Caco-2 (cell line): ENCODE measurements at regions of chr2 and their contacts with region 1.

Region 1: DNA sequence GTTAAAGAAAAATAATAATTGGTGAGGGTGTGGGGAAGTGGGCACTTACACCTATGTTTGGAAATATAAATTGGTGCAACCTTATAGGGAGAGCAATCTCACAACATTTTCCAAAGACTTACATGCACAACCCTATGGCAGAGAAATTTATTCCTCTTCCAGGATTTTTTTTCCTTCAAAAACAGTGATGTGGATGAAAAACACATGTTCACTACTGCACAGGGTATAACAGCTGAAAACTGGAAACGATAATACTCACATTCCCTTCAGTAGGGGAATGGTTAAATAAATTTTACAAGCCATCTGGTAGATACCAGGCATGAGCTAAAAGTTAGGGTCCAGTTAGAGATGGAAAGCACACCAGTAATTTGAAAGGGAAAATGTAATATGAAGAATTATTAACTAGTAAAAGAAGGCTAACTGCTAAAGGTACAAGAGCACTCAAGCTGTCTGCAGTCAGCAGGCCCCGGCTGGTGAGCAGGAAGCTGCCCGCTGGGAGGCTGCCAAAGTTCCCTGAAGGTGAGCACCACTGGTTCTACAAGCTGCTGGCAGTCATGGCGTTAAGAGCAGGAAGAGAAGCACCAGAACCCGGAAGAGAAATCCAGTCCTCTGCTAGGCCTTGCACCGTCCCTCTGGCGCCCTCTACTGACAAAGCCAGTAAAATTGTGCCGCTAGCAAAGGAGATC is 28.4 kb upstream of the CASP8 start:
- DNase-seq: peak; percentile 94 to 95
- H3K4me3 ChIP-seq: no peak overlapping the region
- H3K4me3 Mint-ChIP-seq: peak overlapping the region; percentile 98
- H3K27ac Mint-ChIP-seq: peak overlapping the region; percentile 70
- H3K4me1 ChIP-seq: peaks cover 6% of the 10 kb centered on the region
- H3K4me1 Mint-ChIP-seq: peaks cover 11% of the 10 kb centered on the region
- H3K27me3 ChIP-seq: no peaks in the 10 kb centered on the region
- H3K27me3 Mint-ChIP-seq: no peaks in the 10 kb centered on the region
- CTCF ChIP-seq: peak; percentile 91 to 93

Region 2: DNA sequence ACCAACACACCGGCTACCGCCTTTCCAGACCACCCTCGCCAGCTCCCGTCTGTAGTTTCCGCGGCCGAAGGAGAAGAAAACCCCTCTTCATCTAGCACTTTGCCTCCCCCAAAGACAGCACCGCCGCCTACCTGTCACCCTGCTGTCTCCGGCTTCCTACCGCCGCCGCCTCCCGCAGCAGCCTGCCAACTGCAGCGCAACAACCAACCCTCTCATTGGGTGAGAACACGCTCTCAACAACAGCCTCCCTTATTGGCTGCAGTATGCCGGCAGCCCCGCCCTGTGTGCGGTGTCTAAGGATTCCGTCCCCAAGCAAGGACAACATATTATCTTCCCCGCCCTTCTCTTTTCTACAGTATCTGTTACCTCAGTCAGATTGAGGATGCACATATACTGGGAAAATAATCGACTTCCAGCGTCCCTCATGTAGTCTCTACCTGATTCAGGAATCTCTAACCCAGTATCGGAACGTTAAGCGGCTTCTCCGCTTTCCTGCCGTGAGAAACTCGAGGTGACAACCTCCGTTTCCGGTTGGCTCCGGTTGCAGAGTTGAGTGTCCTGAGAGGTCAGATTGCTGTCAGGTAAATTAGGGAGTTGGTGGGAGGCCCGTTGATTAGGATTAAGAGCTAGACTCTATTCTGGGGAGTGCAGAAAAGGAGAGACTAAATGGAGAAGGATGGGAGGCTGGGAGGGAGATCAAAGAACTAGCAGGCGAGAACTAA is 160.3 kb before region 1 on chr2 and contains the starts of genes HYCC2 and NDUFB3:
- CTCF ChIA-PET with region 1: interaction called, 15 read pairs
- POLR2A ChIA-PET with region 1: no interaction called
- intact Hi-C with region 1: loop called (anchors 2 kb)
- DNase-seq: peak; percentile 96
- H3K4me3 ChIP-seq: peak within 1 kb of the TSS; percentile 71
- H3K4me3 Mint-ChIP-seq: peak within 1 kb of the TSS; percentile 87
- H3K27ac Mint-ChIP-seq: peak within 1 kb of the TSS; percentile 89
- H3K4me1 ChIP-seq: peaks cover 24% of the 10 kb centered on the region
- H3K4me1 Mint-ChIP-seq: peaks cover 11% of the 10 kb centered on the region
- H3K27me3 ChIP-seq: no peaks in the 10 kb centered on the region
- H3K27me3 Mint-ChIP-seq: no peaks in the 10 kb centered on the region
- CTCF ChIP-seq: peak; percentile 7 to 29
- total RNA-seq, gene HYCC2: 21.8 and 21.9 TPM in 2 replicates
- total RNA-seq, gene NDUFB3: 117 and 118 TPM in 2 replicates

Region 3: GRCh38 chr2:201176081-201176481 is 55.8 kb before region 1 on chr2:
- CTCF ChIA-PET with region 1: interaction called, 76 read pairs
- POLR2A ChIA-PET with region 1: interaction called, 3 read pairs
- intact Hi-C with region 1: no loop called
- DNase-seq: no peak
- H3K4me3 ChIP-seq: no peak overlapping the region
- H3K4me3 Mint-ChIP-seq: no peak overlapping the region
- H3K27ac Mint-ChIP-seq: no peak overlapping the region
- H3K4me1 ChIP-seq: no peaks in the 10 kb centered on the region
- H3K4me1 Mint-ChIP-seq: no peaks in the 10 kb centered on the region
- H3K27me3 ChIP-seq: no peaks in the 10 kb centered on the region
- H3K27me3 Mint-ChIP-seq: no peaks in the 10 kb centered on the region
- CTCF ChIP-seq: no peak

Region 4: GRCh38 chr2:201257956-201258665 is 26.2 kb after region 1 on chr2:
- CTCF ChIA-PET with region 1: interaction called, 4 read pairs
- POLR2A ChIA-PET with region 1: no interaction called
- intact Hi-C with region 1: loop called (anchors 1 kb)
- DNase-seq: peak; percentile 62 to 64
- H3K4me3 ChIP-seq: peak overlapping the region; percentile 44
- H3K4me3 Mint-ChIP-seq: peak overlapping the region; percentile 88
- H3K27ac Mint-ChIP-seq: peak overlapping the region; percentile 93
- H3K4me1 ChIP-seq: peaks cover 8% of the 10 kb centered on the region
- H3K4me1 Mint-ChIP-seq: peaks cover 8% of the 10 kb centered on the region
- H3K27me3 ChIP-seq: no peaks in the 10 kb centered on the region
- H3K27me3 Mint-ChIP-seq: no peaks in the 10 kb centered on the region
- CTCF ChIP-seq: no peak

Region 5: DNA sequence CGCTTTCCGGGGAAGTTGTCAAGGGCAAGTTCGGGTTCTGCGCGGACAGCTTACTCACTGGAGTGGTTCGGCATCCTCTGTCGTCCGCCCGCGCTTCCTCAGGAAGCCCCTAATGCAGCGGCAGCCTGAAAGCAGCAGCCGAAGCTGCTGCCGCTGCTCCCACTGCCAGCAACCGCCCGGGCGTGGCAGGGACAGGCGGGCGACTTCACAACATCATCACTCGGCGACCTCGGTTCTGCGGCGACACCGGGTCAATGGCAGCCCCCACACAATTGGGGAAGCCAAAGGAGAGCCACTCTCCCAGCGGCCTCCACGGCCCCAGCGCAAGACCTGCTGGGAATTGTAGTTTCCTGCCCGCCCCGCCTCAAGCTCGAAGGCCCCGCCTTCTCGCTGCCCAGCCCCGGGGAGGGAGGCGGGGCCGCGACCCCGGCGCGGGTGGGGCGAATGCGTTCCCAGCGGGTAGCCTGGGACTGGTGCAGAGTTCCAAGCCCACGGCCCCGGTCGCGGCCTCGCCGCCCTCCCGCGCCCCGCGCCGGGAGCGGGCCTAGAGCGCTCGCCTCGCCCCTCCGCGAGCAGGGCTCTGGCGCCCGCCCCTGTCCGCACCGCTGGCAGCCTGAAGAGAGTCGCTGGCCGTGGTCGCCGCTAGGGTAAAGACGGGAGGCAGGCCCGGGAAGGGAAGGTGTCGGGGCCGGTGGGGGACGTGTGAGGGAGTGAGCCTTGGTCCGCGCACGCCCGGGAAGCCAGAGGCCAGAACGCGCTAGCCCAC is 219.6 kb after region 1 on chr2 and contains the starts of genes STRADB and TRAK2:
- CTCF ChIA-PET with region 1: interaction called, 5 read pairs
- POLR2A ChIA-PET with region 1: interaction called, 4 read pairs
- intact Hi-C with region 1: loop called (anchors 5 kb)
- DNase-seq: peak; percentile 98
- H3K4me3 ChIP-seq: peak within 1 kb of the TSS; percentile 86
- H3K4me3 Mint-ChIP-seq: peak within 1 kb of the TSS; percentile 94
- H3K27ac Mint-ChIP-seq: peak within 1 kb of the TSS; percentile 94
- H3K4me1 ChIP-seq: peaks cover 23% of the 10 kb centered on the region
- H3K4me1 Mint-ChIP-seq: peaks cover 15% of the 10 kb centered on the region
- H3K27me3 ChIP-seq: no peaks in the 10 kb centered on the region
- H3K27me3 Mint-ChIP-seq: no peaks in the 10 kb centered on the region
- CTCF ChIP-seq: peak in 1 of 2 experiments; percentile 13
- total RNA-seq, gene STRADB: 41.2 and 49.0 TPM in 2 replicates
- total RNA-seq, gene TRAK2: 21.9 and 23.2 TPM in 2 replicates